ENCODE measurements at regions of chr1 and their contacts with region 1.

Region 1: DNA sequence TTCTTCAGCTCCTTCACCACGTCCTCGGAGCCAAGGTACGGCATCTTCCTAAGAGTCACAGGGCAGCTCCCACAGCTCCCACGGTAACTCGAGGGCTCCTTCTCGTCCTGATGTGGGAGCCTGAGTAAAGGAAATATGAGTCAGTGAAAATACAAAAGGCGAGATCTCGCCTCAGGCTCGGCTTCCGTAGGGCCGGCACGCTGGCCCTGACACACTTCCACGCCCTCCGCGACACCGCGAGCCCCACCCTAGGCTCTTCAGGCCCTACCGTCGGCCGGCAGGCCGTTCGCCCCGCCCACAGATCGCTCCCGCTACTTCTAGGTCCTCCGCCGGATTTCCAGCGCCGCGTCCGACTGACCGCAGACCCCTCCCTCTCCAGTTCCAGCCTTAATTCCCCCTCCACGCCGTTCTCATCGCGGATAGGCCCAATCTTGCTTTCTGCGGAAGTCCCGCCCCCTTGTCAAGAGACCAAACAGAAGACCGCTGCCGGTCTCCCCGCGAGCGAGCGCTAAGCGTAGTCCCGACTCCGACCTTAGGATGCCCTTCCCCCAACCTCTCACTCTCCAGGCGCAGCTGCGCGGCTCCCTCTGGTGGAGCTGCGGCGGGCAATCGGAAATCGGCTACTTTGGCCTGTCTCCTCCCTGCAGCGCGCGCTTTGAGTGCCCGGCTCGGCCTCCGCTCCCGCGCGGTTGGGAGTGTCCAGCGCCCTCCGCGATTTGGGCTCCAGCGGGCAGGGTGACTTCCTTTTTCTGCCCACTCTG is at the starts of genes AP4B1 and DCLRE1B:
- DNase-seq: peak; percentile 91 to 98 (median 97)
- H3K4me3 ChIP-seq: peak within 1 kb of the TSS; percentile 69 to 99 (median 90)
- H3K27ac ChIP-seq: peak within 1 kb of the TSS; percentile 79 to 99 (median 96)
- H3K27me3 ChIP-seq: no peaks in the 10 kb centered on the region
- CTCF ChIP-seq: peak; percentile 60 to 94 (median 82)
- total RNA-seq, gene AP4B1: 26.7 to 71.0 (median 42.4) TPM
- total RNA-seq, gene DCLRE1B: 2.4 to 8.8 (median 4.9) TPM

Region 2: DNA sequence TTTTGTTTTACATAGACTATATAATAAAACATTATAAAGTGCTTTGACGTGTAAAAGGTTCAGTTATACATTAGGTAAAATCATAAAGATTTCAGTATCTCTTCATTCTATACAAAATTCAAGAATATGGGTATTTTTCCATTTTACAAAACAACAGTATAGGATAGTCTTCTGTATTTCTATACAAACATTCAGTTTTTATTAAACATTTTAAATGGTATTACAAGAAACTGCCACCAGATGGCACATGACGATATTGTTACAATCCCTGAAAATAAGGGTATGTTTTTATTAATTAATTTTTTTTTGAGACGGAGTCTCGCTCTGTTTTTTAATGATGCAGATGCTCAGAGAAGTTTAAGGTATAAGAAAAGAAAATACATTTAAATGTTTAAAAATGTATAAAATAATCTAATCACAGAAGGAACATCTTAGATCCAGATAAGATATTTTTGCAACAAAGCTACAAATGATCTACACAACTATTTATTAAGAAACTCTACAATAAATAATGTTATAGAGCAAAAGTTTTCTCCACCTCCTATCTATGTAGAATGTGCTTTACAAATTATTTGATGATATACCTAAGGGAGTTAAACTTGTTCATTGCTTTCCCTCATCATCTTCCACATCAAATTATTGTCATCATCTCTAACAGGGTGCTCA is 69.1 kb before region 1 on chr1:
- intact Hi-C with region 1: loop called (anchors 2 to 5 kb)
- DNase-seq: peak in 1 of 10 donors; percentile 14
- H3K4me3 ChIP-seq: peak overlapping the region in 18 of 59 donors; percentile 2 to 42 (median 19)
- H3K27ac ChIP-seq: no peak overlapping the region
- H3K27me3 ChIP-seq: no peaks in the 10 kb centered on the region
- CTCF ChIP-seq: peak; percentile 54 to 92 (median 74)

Region 3: GRCh38 chr1:113928941-113929749 is 24.3 kb after region 1 on chr1 and contains the start of gene HIPK1:
- intact Hi-C with region 1: loop called (anchors 1 kb)
- DNase-seq: peak; percentile 82 to 96 (median 94)
- H3K4me3 ChIP-seq: peak within 1 kb of the TSS; percentile 61 to 98 (median 93)
- H3K27ac ChIP-seq: peak within 1 kb of the TSS; percentile 76 to 99 (median 94)
- H3K27me3 ChIP-seq: no peaks in the 10 kb centered on the region
- CTCF ChIP-seq: peak in 18 of 56 donors; percentile 5 to 49 (median 17)
- total RNA-seq, gene HIPK1: 78.9 to 158 (median 100) TPM

Region 4: DNA sequence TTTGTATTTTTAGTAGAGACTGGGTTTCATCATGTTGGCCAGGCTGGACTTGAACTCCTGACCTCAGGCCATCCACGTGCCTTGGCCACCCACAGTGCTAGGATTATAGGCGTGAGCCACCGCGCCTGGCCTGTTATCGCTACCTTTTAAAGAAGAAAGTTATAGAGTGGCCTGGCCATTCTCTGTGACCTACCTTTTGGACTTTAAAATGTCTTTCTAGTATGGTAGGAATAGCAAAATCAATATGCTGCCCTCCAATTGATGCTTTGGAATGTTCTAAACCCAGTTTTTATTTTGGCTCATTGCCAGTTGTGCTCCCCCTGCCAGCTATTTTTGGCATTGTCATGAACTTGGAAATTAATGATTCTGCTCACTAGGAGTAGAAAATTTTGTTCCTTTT is 44.2 kb after region 1 on chr1:
- intact Hi-C with region 1: no loop called
- DNase-seq: no peak
- H3K4me3 ChIP-seq: no peak overlapping the region
- H3K27ac ChIP-seq: peak overlapping the region in 2 of 59 donors; percentile 14 to 19
- H3K27me3 ChIP-seq: no peaks in the 10 kb centered on the region
- CTCF ChIP-seq: peak in 15 of 56 donors; percentile 7 to 43 (median 18)